Colonic mucosa (tissue), 4 donors: ENCODE measurements at regions of chr9 and their contacts with region 1.

Region 1: DNA sequence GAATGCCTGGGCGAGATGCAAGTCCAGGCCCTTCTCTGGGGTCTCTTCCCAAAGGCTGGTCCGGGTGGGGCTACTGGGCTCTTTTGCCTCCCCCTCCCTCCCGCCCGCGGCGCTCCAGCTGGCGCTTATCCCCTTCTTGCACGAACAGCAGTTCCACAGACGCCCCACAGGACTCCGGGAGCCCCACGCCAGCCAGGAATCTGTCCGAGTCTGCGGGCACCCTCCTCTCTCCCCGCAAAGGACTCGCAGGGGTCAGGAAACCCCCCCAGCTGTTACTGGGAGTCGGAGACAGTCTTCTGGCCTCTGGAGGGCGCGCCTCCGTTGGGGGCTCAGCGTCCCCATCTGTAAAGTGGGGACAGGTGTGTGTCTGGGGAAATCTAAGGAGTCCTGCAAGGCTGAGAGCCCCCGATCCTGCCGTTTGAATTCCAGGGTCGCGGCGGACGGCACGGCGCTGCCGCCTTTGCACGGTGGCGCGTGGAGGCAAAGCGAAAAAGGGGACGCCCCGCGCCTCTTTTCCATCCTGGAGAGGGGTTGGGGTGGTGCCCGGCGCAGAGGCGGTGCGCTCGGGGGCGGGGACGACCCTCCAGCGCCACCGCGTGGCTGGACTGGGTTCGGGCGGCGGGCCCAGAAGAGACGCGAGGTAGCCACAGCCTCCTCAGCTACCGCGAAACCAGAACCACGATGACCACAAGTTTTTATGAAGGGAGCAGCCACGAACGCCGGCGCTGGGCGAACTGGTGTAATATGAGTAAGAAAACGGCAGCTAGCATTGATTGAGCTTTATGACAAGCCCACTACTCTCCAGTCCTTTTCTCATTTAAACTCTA is 2.9 kb upstream of the CCIN start:
- DNase-seq: peak; percentile 85
- H3K4me3 ChIP-seq: peak overlapping the region; percentile 46
- H3K27ac ChIP-seq: peak overlapping the region; percentile 65
- H3K4me1 ChIP-seq: peaks cover 3% of the 10 kb centered on the region
- H3K27me3 ChIP-seq: no peaks in the 10 kb centered on the region
- CTCF ChIP-seq: peak; percentile 94

Region 2: GRCh38 chr9:36102742-36103495 is 63.4 kb before region 1 on chr9:
- intact Hi-C with region 1: loop called (anchors 2 kb)
- DNase-seq: peak; percentile 92
- H3K4me3 ChIP-seq: no peak overlapping the region
- H3K27ac ChIP-seq: no peak overlapping the region
- H3K4me1 ChIP-seq: no peaks in the 10 kb centered on the region
- H3K27me3 ChIP-seq: no peaks in the 10 kb centered on the region
- CTCF ChIP-seq: peak; percentile 79

Region 3: GRCh38 chr9:36218411-36218901 is 52.1 kb after region 1 on chr9:
- intact Hi-C with region 1: no loop called
- DNase-seq: no peak
- H3K4me3 ChIP-seq: no peak overlapping the region
- H3K27ac ChIP-seq: no peak overlapping the region
- H3K4me1 ChIP-seq: no peaks in the 10 kb centered on the region
- H3K27me3 ChIP-seq: no peaks in the 10 kb centered on the region
- CTCF ChIP-seq: no peak

Region 4: DNA sequence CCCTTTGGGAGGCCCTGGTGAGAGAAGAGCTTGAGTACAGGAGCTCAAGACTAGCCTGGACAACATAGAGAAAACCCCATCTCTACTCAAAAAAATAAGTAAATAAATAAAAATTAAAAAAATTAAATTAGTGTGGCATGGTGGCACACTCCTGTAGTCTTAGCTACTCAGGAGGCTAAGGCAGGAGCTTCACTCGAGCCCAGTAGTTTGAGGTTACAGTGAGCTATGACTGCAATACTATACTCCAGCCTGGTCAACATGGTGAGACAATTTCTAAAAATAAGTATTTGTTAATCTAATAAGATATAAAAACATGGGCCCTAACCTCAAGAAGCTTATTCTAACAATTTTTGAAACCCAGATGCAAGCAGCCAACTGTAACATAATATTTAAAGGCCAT is 226.2 kb after region 1 on chr9:
- intact Hi-C with region 1: no loop called
- DNase-seq: no peak
- H3K4me3 ChIP-seq: no peak overlapping the region
- H3K27ac ChIP-seq: no peak overlapping the region
- H3K4me1 ChIP-seq: no peaks in the 10 kb centered on the region
- H3K27me3 ChIP-seq: no peaks in the 10 kb centered on the region
- CTCF ChIP-seq: no peak